Activated T-helper 1 cell treated with anti-CD3 and anti-CD28 coated beads, Interleukin-12 subunit alpha, Interleukin-12 subunit beta, Interleukin-2, Interleukin-4 antibody, amounts not matched to agents 30 ng/mL and 10 ng/mL and 1 ng/mL, durations not matched to agents 14 hours and 24 hours and 36 hours (primary cell): ENCODE measurements at regions of chr11 and their contacts with region 1.

Region 1: GRCh38 chr11:67053896-67054842 is 2.5 kb upstream of the RHOD start:
- DNase-seq: peak; percentile 24
- H3K4me3 Mint-ChIP-seq: no peak overlapping the region
- H3K27ac Mint-ChIP-seq: no peak overlapping the region
- H3K4me1 Mint-ChIP-seq: peaks cover 10% of the 10 kb centered on the region
- H3K27me3 Mint-ChIP-seq: peaks cover 18% of the 10 kb centered on the region

Region 2: DNA sequence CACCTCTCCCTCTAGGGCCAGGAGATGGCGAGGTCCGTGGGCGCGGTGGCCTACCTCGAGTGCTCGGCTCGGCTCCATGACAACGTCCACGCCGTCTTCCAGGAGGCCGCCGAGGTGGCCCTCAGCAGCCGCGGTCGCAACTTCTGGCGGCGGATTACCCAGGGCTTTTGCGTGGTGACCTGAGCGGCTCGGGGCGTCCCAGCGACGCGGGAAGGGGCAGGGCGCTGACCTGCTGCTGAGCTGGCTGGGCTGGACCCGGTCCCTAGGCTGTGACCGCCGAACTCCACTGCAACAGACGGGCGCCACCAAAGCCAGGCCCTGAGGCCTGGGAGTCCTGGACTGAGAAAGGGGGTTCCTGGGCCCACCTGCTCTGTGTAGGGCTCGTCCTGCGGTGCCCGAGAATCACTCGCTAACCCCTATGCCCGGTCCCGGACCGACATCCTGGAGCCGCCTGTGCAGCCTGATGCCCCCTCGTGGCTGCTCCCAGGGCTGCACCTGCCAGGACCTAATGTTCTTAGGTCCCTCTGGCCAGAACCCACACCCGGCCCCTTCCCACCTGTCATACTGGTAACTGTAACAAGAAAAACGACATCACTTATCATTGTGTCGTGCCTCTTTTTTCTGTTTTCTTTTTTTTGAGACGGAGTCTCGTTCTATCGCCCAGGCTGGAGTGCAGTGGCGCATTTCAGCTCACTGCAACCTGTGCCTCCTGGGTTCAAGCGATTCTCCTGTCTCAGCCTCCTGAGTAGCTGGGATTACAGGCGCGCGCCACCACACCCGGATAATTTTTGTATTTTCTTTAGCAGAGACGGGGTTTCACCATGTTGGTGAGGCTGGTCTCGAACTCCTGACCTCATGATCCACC is 17.5 kb after region 1 on chr11:
- intact Hi-C with region 1: loop called (anchors 1 kb)
- DNase-seq: peak; percentile 62
- H3K4me3 Mint-ChIP-seq: peak overlapping the region; percentile 24
- H3K27ac Mint-ChIP-seq: no peak overlapping the region
- H3K4me1 Mint-ChIP-seq: no peaks in the 10 kb centered on the region
- H3K27me3 Mint-ChIP-seq: peaks cover 7% of the 10 kb centered on the region

Region 3: DNA sequence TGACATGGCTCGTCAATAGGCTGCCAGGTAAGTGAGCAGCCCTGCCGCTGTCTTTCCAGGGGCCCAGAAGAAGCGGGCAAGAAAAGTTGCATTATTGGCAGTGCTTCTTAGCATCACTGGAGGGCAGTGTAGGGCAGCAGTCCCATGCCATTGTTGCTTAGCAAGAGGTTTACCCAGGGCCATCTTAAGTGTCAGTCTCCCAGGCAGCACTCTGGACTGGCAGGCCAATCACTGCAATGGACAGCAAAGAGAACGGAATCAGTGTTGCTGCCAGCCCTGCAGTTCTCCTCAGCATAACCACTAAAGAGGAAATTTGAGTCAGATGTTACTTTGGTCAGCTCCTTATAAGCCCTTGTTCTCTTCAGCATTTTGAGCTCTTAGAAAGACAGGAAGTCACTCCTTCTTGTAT is 198.7 kb after region 1 on chr11:
- intact Hi-C with region 1: no loop called
- DNase-seq: no peak
- H3K4me3 Mint-ChIP-seq: no peak overlapping the region
- H3K27ac Mint-ChIP-seq: peak overlapping the region; percentile 30
- H3K4me1 Mint-ChIP-seq: peaks cover 55% of the 10 kb centered on the region
- H3K27me3 Mint-ChIP-seq: no peaks in the 10 kb centered on the region

Region 4: GRCh38 chr11:67288452-67289225 is 234.5 kb after region 1 on chr11:
- intact Hi-C with region 1: no loop called
- DNase-seq: peak; percentile 88
- H3K4me3 Mint-ChIP-seq: peak overlapping the region; percentile 77
- H3K27ac Mint-ChIP-seq: peak overlapping the region; percentile 97
- H3K4me1 Mint-ChIP-seq: peaks cover 36% of the 10 kb centered on the region
- H3K27me3 Mint-ChIP-seq: peaks cover 2% of the 10 kb centered on the region